Gastrocnemius medialis (tissue), 4 donors: ENCODE measurements at regions of chr14 and their contacts with region 1.

Region 1: DNA sequence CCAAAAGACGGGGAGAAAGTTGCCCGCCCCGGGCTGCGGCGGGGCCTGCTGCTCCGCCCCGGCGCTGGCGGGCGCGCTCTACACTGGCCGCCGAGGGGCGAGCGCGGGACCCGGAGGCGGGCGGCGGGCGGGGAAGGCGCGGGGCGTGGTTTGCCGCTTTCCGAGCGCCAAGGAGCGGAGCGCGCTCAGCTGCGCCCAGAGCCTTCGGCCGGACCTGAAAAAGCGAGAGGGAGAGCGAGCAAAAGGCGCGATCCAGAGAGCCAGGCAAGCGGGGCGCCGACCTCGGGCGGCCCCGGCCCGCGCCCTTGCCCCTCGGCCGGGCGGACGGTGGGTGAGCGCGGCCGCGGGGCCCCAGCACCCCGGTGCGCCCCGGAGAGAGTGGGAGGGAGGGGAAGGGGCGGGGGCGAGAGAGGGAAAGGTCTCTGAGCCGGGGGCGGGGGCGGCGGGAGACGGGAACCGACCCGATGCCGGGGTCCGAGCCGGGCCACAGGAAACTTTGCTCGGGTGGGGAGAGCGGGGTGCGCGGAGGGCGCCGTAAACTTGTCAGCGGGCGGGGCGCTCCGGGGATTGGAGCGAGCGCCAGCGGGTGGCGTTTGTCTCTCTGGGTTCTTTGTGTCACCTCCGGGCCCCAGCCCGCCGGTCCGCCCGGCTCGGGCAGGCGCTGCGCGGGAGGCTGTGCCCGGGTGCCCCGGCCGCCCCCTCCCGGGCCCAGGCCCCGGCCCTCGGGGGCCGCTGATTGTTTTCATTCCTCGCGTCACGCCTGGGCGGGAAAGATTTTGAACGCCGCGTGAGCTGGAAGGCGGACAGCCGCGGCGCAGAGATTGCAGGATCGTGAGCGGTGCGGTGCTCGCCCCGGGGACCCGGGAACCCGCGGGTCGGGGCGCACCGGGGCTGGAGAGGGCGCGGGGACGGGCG is at the start of gene SYNE2:
- DNase-seq: peak; percentile 58 to 62
- ATAC-seq: peak; percentile 85
- H3K4me3 ChIP-seq: peak within 1 kb of the TSS; percentile 67 to 86 (median 82)
- H3K27ac ChIP-seq: peak within 1 kb of the TSS; percentile 88 to 94 (median 94)
- H3K4me1 ChIP-seq: peaks cover 3 to 21% of the 10 kb centered on the region in 2 donors
- H3K27me3 ChIP-seq: no peaks in the 10 kb centered on the region
- CTCF ChIP-seq: peak in 4 of 5 experiments; percentile 22 to 48 (median 41)
- POLR2A ChIP-seq: peak; percentile 58 to 66
- total RNA-seq, gene SYNE2: 96.9 to 207 (median 182) TPM

Region 2: GRCh38 chr14:63437953-63438757 is 414.9 kb before region 1 on chr14:
- in situ Hi-C with region 1: no loop called
- intact Hi-C with region 1: loop called (anchors 10 kb)
- DNase-seq: peak in 1 of 2 donors; percentile 37
- ATAC-seq: peak; percentile 6 to 17
- H3K4me3 ChIP-seq: peak overlapping the region in 3 of 4 donors; percentile 11 to 23 (median 16)
- H3K27ac ChIP-seq: peak overlapping the region; percentile 74 to 88 (median 85)
- H3K4me1 ChIP-seq: peaks cover 58 to 68% of the 10 kb centered on the region in 2 donors
- H3K27me3 ChIP-seq: no peaks in the 10 kb centered on the region
- CTCF ChIP-seq: peak in 1 of 5 experiments; percentile 36
- POLR2A ChIP-seq: no peak

Region 3: GRCh38 chr14:63727774-63728728 is 125.0 kb before region 1 on chr14 and contains the start of gene SGPP1:
- in situ Hi-C with region 1: no loop called
- intact Hi-C with region 1: loop called (anchors 1 kb)
- DNase-seq: peak; percentile 29 to 66
- ATAC-seq: peak; percentile 87 to 91
- H3K4me3 ChIP-seq: peak within 1 kb of the TSS; percentile 83 to 92 (median 88)
- H3K27ac ChIP-seq: peak within 1 kb of the TSS; percentile 82 to 90 (median 86)
- H3K4me1 ChIP-seq: peaks cover 17 to 18% of the 10 kb centered on the region in 2 donors
- H3K27me3 ChIP-seq: no peaks in the 10 kb centered on the region
- CTCF ChIP-seq: peak in 2 of 5 experiments; percentile 36 to 43
- POLR2A ChIP-seq: peak; percentile 64 to 66
- total RNA-seq, gene SGPP1: 3.5 to 11.3 (median 8.1) TPM

Region 4: DNA sequence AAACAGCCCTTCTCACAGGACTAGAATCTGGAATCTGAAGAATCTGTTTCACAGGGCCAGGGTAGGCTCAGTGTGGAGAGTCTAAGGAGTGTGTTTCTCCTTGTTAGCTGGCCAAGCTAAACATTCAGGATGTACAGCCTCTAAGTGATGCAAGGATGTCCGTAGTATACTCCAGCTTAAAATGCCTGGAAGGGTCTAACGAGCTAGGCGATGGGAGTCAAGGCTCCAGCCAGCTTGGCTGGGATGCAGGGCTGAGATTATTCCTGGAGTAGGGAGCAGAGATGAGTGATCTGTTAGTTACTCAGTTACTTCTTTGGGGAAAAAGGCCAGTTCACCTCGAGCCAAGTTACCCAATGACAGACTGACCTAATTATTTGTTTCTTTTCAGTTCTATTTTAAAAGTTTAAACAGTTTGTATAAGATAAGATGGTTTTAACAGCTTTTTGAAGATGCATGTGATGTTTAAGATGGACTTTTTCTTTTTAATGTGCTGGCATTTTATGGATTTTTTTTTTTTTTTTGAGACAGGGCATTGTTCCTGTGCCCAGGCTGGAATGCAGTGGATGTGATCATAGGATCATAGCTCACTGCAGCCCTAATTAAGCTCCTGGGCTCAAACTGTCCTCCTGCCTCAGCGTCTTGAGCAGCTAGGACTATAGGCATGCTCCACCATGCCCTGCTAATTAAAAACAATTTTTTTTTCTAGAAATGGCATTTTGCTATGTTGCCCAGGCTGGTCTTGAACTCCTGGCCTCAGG is 40.8 kb after region 1 on chr14:
- in situ Hi-C with region 1: no loop called
- intact Hi-C with region 1: loop called (anchors 2 kb)
- DNase-seq: peak; percentile 31 to 48
- ATAC-seq: peak; percentile 81 to 86
- H3K4me3 ChIP-seq: peak overlapping the region in 1 of 4 donors; percentile 5
- H3K27ac ChIP-seq: peak overlapping the region; percentile 45 to 70 (median 57)
- H3K4me1 ChIP-seq: peaks cover 46 to 66% of the 10 kb centered on the region in 2 donors
- H3K27me3 ChIP-seq: no peaks in the 10 kb centered on the region
- CTCF ChIP-seq: no peak
- POLR2A ChIP-seq: no peak

Region 5: GRCh38 chr14:63986789-63987533 is 133.9 kb after region 1 on chr14:
- in situ Hi-C with region 1: no loop called
- intact Hi-C with region 1: loop called (anchors 5 kb)
- DNase-seq: no peak
- ATAC-seq: peak in 1 of 2 donors; percentile 56
- H3K4me3 ChIP-seq: no peak overlapping the region
- H3K27ac ChIP-seq: no peak overlapping the region
- H3K4me1 ChIP-seq: no peaks in the 10 kb centered on the region
- H3K27me3 ChIP-seq: no peaks in the 10 kb centered on the region
- CTCF ChIP-seq: no peak
- POLR2A ChIP-seq: no peak

Region 6: GRCh38 chr14:64387694-64388532 is 534.8 kb after region 1 on chr14 and contains the start of gene MTHFD1:
- in situ Hi-C with region 1: no loop called
- intact Hi-C with region 1: loop called (anchors 5 kb)
- DNase-seq: peak; percentile 99 to 100
- ATAC-seq: peak; percentile 94 to 96
- H3K4me3 ChIP-seq: peak within 1 kb of the TSS; percentile 69 to 82 (median 78)
- H3K27ac ChIP-seq: peak within 1 kb of the TSS; percentile 90 to 96 (median 92)
- H3K4me1 ChIP-seq: peaks cover 16 to 29% of the 10 kb centered on the region in 2 donors
- H3K27me3 ChIP-seq: no peaks in the 10 kb centered on the region
- CTCF ChIP-seq: no peak
- POLR2A ChIP-seq: peak; percentile 54 to 60
- total RNA-seq, gene MTHFD1: 36.2 to 68.7 (median 42.0) TPM